CD4-positive, alpha-beta memory T cell (primary cell): ENCODE measurements at regions of chr2 and their contacts with region 1.

Region 1: DNA sequence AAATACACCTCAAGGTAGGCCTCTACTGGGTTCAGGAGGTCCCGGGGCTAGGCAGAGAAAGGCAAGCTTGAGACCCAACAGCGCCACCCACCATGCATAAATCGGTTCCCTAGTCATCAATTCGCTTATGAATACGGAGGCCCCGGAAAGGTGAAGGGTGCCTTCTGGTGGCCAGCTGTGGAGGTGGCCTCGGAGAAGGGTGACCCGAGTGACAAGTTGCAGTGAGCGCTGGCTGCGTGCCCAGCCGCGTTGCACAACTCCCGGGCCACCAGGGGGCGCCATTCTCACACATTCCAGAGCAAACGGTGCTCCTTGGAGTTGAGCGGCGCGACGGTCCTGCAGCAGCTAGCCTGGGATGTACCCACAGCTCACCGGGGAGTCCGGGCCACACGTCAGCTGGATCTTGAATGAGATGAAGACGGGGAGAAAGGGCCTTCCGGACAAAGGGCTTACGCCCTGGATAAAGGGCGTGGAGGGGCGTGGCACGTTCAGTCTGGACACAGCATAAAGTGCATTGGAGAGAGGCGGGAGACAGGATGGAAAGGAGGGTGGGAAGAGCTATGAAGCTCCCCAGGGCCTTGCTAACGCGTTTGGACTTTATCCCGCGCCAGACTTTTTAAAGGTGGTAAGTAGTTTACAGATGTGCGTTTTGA is 20.4 kb downstream of the TMSB10 start:
- DNase-seq: peak; percentile 96 to 97 (median 97)
- H3K4me3 ChIP-seq: peak overlapping the region; percentile 73 to 86
- H3K4me3 Mint-ChIP-seq: peak overlapping the region; percentile 90 to 99 (median 95)
- H3K27ac ChIP-seq: peak overlapping the region; percentile 62
- H3K27ac Mint-ChIP-seq: peak overlapping the region; percentile 91 to 99 (median 95)
- H3K4me1 ChIP-seq: peaks cover 40% of the 10 kb centered on the region
- H3K4me1 Mint-ChIP-seq: peaks cover 25 to 48% (median 36%) of the 10 kb centered on the region in 4 donors
- H3K27me3 ChIP-seq: no peaks in the 10 kb centered on the region
- H3K27me3 Mint-ChIP-seq: no peaks in the 10 kb centered on the region

Region 2: DNA sequence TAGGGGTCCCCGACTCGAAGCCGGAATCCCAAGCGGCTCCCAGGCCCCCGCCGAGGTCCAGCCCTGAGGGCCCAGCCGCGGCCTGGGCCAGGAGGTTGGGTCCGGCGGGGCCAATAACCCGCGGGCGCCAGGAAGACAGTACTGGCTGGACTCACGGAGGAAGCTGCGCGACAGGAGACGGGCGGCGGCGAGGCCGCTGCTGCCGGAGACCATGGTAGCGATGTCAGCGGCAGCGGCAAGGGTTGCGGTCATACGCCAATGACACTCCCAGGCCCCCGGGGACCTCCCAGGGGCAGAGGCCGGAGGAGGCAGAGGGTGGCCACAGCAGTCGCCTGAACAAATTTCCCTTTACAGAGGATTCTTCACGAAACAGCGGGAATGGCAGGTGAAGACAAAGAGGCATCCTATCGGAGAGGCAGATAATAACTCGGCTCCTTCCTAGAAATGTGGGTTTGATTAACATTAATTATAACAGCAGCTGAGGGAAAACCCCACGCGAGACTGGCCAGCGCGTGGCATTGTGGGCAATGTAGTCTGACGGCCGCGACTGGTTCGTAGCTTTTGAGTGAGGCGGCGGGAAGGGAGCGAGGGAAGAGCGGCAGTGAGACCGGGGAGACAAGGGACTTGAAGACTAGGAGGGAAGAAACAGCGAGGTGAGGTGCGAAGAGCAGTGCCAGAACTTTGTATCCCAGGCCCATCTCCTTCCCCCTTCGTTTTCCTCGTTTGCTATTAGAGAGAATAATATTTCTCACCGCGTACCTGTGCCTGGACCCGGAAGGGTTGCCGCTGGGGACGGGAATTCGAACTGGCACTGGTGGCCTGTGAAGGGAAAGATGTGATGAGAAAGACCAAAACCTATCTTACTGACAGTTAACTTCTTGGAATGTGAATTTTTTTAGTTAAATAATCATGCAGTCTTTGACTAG is 466.6 kb before region 1 on chr2 and contains the start of gene SUCLG1:
- CTCF ChIA-PET with region 1: no interaction called
- POLR2A ChIA-PET with region 1: interaction called, 9 read pairs
- intact Hi-C with region 1: loop called (anchors 1 kb)
- DNase-seq: peak; percentile 89 to 92 (median 90)
- H3K4me3 ChIP-seq: peak within 1 kb of the TSS; percentile 68 to 76
- H3K4me3 Mint-ChIP-seq: peak within 1 kb of the TSS; percentile 90 to 99 (median 91)
- H3K27ac ChIP-seq: peak within 1 kb of the TSS; percentile 77
- H3K27ac Mint-ChIP-seq: peak within 1 kb of the TSS; percentile 89 to 99 (median 98)
- H3K4me1 ChIP-seq: peaks cover 39% of the 10 kb centered on the region
- H3K4me1 Mint-ChIP-seq: peaks cover 36 to 49% (median 43%) of the 10 kb centered on the region in 4 donors
- H3K27me3 ChIP-seq: no peaks in the 10 kb centered on the region
- H3K27me3 Mint-ChIP-seq: no peaks in the 10 kb centered on the region
- total RNA-seq, gene SUCLG1: 46.5 to 46.6 TPM

Region 3: GRCh38 chr2:84741296-84741765 is 184.5 kb before region 1 on chr2:
- CTCF ChIA-PET with region 1: interaction called, 34 read pairs
- POLR2A ChIA-PET with region 1: interaction called, 14 read pairs
- intact Hi-C with region 1: loop called (anchors 1 kb)
- DNase-seq: peak; percentile 47 to 58 (median 51)
- H3K4me3 ChIP-seq: no peak overlapping the region
- H3K4me3 Mint-ChIP-seq: peak overlapping the region in 4 of 8 donors; percentile 12 to 39 (median 28)
- H3K27ac ChIP-seq: no peak overlapping the region
- H3K27ac Mint-ChIP-seq: peak overlapping the region in 6 of 7 donors; percentile 17 to 87 (median 64)
- H3K4me1 ChIP-seq: peaks cover 22% of the 10 kb centered on the region
- H3K4me1 Mint-ChIP-seq: peaks cover 15 to 28% (median 21%) of the 10 kb centered on the region in 4 donors
- H3K27me3 ChIP-seq: no peaks in the 10 kb centered on the region
- H3K27me3 Mint-ChIP-seq: no peaks in the 10 kb centered on the region

Region 4: DNA sequence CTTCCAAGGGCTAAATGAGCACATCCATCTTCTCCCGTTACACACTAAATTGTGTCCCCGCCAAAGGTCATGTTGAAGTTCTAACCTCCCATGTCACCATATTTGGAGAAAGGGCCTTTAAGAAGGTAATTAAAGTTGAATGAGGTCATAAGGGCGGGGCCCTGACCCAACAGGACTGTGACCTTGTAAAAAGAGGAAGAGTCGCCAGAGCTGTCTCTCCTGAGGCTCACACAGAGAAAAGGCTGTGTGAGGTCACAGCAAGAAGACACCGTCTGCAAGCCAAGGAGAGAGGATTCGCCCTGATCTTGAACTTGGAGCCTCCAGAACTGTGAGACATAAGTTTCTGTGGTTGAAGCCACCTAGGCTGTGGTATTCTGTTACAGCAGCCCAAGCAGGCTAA is 69.1 kb before region 1 on chr2:
- CTCF ChIA-PET with region 1: interaction called, 33 read pairs
- POLR2A ChIA-PET with region 1: interaction called, 14 read pairs
- intact Hi-C with region 1: no loop called
- DNase-seq: peak in 3 of 5 donors; percentile 29 to 51 (median 30)
- H3K4me3 ChIP-seq: peak overlapping the region in 1 of 2 donors; percentile 23
- H3K4me3 Mint-ChIP-seq: peak overlapping the region; percentile 40 to 89 (median 77)
- H3K27ac ChIP-seq: peak overlapping the region; percentile 53
- H3K27ac Mint-ChIP-seq: peak overlapping the region; percentile 83 to 97 (median 96)
- H3K4me1 ChIP-seq: peaks cover 98% of the 10 kb centered on the region
- H3K4me1 Mint-ChIP-seq: peaks cover 84 to 97% (median 91%) of the 10 kb centered on the region in 4 donors
- H3K27me3 ChIP-seq: no peaks in the 10 kb centered on the region
- H3K27me3 Mint-ChIP-seq: no peaks in the 10 kb centered on the region

Region 5: DNA sequence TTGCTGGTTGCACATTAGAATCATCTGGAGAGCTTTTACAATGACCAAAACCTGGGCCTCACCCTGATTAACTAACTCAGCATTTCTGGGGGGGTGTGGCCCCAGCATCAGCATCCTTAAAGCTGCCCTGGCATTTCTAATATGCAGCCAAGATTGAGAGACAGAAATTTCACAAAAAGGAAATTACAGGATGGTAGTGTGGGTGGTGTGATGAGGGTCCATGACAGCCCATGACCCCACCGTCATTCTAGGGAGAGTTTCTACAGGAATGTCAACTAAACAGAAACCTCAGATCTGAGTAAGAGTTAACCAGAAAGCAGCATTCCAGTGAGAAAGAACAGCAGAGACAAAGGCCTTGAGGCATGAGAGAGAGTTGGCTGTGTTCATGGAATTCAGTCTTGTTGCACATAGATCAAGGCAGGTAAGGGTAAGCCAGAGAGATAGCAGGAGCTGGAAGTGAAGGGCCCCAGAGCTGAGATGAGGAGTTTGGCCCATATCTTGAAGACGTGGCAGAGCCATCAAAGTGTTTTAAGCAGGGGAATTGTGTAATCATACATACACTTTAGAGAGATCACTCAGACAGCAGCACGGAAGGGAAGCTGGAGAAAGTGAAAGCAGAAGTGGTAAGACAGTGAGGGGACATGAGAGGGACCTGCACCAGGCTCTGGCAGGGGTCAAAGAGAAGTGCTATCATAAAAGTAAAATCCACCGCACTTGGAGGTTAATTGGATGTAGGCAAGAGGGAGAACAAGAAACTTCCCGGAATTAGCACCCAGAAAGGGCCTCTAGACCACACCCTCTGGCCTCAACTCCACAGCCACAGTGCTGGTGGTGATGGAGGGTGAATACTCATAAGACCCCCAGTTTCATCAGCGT is 37.2 kb before region 1 on chr2:
- CTCF ChIA-PET with region 1: interaction called, 271 read pairs
- POLR2A ChIA-PET with region 1: interaction called, 105 read pairs
- intact Hi-C with region 1: no loop called
- DNase-seq: peak; percentile 62 to 69 (median 66)
- H3K4me3 ChIP-seq: peak overlapping the region; percentile 32 to 42
- H3K4me3 Mint-ChIP-seq: peak overlapping the region; percentile 72 to 90 (median 82)
- H3K27ac ChIP-seq: peak overlapping the region; percentile 81
- H3K27ac Mint-ChIP-seq: peak overlapping the region; percentile 90 to 99 (median 97)
- H3K4me1 ChIP-seq: peaks cover 23% of the 10 kb centered on the region
- H3K4me1 Mint-ChIP-seq: peaks cover 22 to 43% (median 38%) of the 10 kb centered on the region in 4 donors
- H3K27me3 ChIP-seq: no peaks in the 10 kb centered on the region
- H3K27me3 Mint-ChIP-seq: no peaks in the 10 kb centered on the region

Region 6: GRCh38 chr2:84946204-84947009 is 20.6 kb after region 1 on chr2:
- CTCF ChIA-PET with region 1: interaction called, 111 read pairs
- POLR2A ChIA-PET with region 1: interaction called, 25 read pairs
- intact Hi-C with region 1: loop called (anchors 1 kb)
- DNase-seq: peak; percentile 47 to 84 (median 52)
- H3K4me3 ChIP-seq: peak overlapping the region in 1 of 2 donors; percentile 11
- H3K4me3 Mint-ChIP-seq: peak overlapping the region; percentile 27 to 84 (median 66)
- H3K27ac ChIP-seq: peak overlapping the region; percentile 33
- H3K27ac Mint-ChIP-seq: peak overlapping the region; percentile 76 to 97 (median 91)
- H3K4me1 ChIP-seq: peaks cover 23% of the 10 kb centered on the region
- H3K4me1 Mint-ChIP-seq: peaks cover 18 to 33% (median 25%) of the 10 kb centered on the region in 4 donors
- H3K27me3 ChIP-seq: no peaks in the 10 kb centered on the region
- H3K27me3 Mint-ChIP-seq: no peaks in the 10 kb centered on the region

Region 7: GRCh38 chr2:85017411-85018048 is 91.7 kb after region 1 on chr2:
- CTCF ChIA-PET with region 1: interaction called, 13 read pairs
- POLR2A ChIA-PET with region 1: interaction called, 13 read pairs
- intact Hi-C with region 1: loop called (anchors 1 kb)
- DNase-seq: peak in 4 of 5 donors; percentile 11 to 25 (median 22)
- H3K4me3 ChIP-seq: no peak overlapping the region
- H3K4me3 Mint-ChIP-seq: peak overlapping the region in 3 of 8 donors; percentile 8 to 45 (median 41)
- H3K27ac ChIP-seq: no peak overlapping the region
- H3K27ac Mint-ChIP-seq: peak overlapping the region; percentile 18 to 88 (median 67)
- H3K4me1 ChIP-seq: peaks cover 41% of the 10 kb centered on the region
- H3K4me1 Mint-ChIP-seq: peaks cover 48 to 70% (median 58%) of the 10 kb centered on the region in 4 donors
- H3K27me3 ChIP-seq: no peaks in the 10 kb centered on the region
- H3K27me3 Mint-ChIP-seq: no peaks in the 10 kb centered on the region

Region 8: DNA sequence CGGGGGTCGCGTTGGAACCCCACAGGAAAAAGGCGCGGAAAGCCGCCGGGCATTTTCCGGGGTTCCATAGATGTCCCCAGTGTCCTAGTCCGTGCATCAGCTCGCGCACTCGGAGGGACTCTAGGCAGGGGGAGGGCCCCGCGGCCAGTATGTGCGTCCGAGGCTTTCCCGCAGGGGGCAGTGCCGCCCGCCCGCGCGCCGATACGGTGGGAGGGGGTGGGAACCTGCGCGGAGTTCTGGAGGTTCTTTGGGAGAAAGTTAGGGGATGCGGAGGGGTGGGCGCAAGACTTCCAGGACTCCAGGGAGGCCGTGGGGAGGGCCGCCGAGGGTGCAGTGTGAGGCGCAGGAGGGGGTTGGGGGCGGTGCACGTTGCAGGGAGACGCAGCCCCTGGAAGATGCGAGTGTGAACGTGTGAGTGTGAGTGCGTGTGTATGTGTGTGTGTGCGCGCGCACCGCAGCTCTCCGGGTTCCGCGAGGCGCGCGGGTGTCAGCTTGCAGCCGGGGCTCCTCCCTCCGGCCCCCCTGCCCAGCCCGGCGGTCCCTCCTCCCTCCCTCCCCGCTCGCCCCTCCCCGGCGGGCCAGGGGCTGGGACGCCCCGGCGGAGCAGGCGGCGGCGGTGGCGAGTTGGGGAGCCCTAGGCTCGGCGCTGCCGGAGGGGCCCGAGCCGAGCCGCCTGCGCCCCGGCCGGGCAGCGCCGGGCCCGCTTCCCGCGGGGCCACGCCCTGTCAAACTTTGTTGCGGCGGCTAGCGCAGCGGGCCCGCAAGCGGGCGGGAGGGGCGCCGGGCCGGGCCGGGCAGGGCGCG is 207.2 kb after region 1 on chr2 and contains the start of gene TCF7L1:
- CTCF ChIA-PET with region 1: no interaction called
- POLR2A ChIA-PET with region 1: no interaction called
- intact Hi-C with region 1: no loop called
- DNase-seq: peak; percentile 4 to 41 (median 20)
- H3K4me3 ChIP-seq: peak within 1 kb of the TSS in 1 of 2 donors; percentile 24
- H3K4me3 Mint-ChIP-seq: peak within 1 kb of the TSS; percentile 65 to 85 (median 77)
- H3K27ac ChIP-seq: no peak within 1 kb of the TSS
- H3K27ac Mint-ChIP-seq: no peak within 1 kb of the TSS
- H3K4me1 ChIP-seq: peaks cover 18% of the 10 kb centered on the region
- H3K4me1 Mint-ChIP-seq: peaks cover 4 to 20% (median 12%) of the 10 kb centered on the region in 4 donors
- H3K27me3 ChIP-seq: peaks cover 16% of the 10 kb centered on the region
- H3K27me3 Mint-ChIP-seq: peaks cover 34 to 42% of the 10 kb centered on the region in 2 donors
- total RNA-seq, gene TCF7L1: not detected